Endothelial cell of umbilical vein (primary cell): ENCODE measurements at regions of chr2 and their contacts with region 1.

Region 1: GRCh38 chr2:215711471-215712034 is 275.7 kb upstream of the FN1 start:
- DNase-seq: peak; percentile 92
- H3K4me3 ChIP-seq: no peak overlapping the region
- H3K27ac ChIP-seq: peak overlapping the region; percentile 98
- H3K4me1 ChIP-seq: peaks cover 51% of the 10 kb centered on the region
- H3K27me3 ChIP-seq: no peaks in the 10 kb centered on the region
- CTCF ChIP-seq: no peak
- POLR2A ChIP-seq: peak; percentile 82

Region 2: GRCh38 chr2:215454519-215455246 is 256.9 kb before region 1 on chr2:
- CTCF ChIA-PET with region 1: interaction called, 4 read pairs
- POLR2A ChIA-PET with region 1: no interaction called
- dilution Hi-C with region 1: no loop called
- intact Hi-C with region 1: loop called (anchors 2 kb)
- DNase-seq: peak; percentile 73
- H3K4me3 ChIP-seq: no peak overlapping the region
- H3K27ac ChIP-seq: no peak overlapping the region
- H3K4me1 ChIP-seq: peaks cover 2% of the 10 kb centered on the region
- H3K27me3 ChIP-seq: no peaks in the 10 kb centered on the region
- CTCF ChIP-seq: peak; percentile 69
- POLR2A ChIP-seq: no peak

Region 3: DNA sequence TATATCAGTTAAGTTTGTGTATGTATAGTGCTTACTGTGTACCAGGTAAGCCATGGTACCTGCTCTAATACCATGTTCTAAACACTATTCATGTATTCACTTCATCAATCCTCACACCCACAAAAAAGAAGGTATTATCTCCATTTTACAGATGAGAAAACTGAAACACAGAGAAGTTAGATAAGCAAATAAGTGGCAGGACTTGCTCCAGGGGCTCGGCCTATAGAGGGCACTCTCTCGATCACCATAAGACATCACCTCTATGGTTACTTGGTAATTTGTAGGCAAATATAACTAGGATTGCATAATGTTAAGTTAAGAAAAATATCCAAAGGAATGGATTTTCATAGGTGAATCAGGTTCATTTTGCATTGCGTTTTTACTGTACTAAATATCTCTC is 157.6 kb before region 1 on chr2:
- CTCF ChIA-PET with region 1: no interaction called
- POLR2A ChIA-PET with region 1: no interaction called
- dilution Hi-C with region 1: no loop called
- intact Hi-C with region 1: no loop called
- DNase-seq: no peak
- H3K4me3 ChIP-seq: no peak overlapping the region
- H3K27ac ChIP-seq: no peak overlapping the region
- H3K4me1 ChIP-seq: peaks cover 12% of the 10 kb centered on the region
- H3K27me3 ChIP-seq: no peaks in the 10 kb centered on the region
- CTCF ChIP-seq: no peak
- POLR2A ChIP-seq: no peak

Region 4: GRCh38 chr2:215601990-215602721 is 109.4 kb before region 1 on chr2:
- CTCF ChIA-PET with region 1: interaction called, 3 read pairs
- POLR2A ChIA-PET with region 1: no interaction called
- dilution Hi-C with region 1: no loop called
- intact Hi-C with region 1: loop called (anchors 2 kb)
- DNase-seq: peak; percentile 97
- H3K4me3 ChIP-seq: peak overlapping the region in 1 of 3 experiments; percentile 19
- H3K27ac ChIP-seq: peak overlapping the region; percentile 85
- H3K4me1 ChIP-seq: peaks cover 24% of the 10 kb centered on the region
- H3K27me3 ChIP-seq: no peaks in the 10 kb centered on the region
- CTCF ChIP-seq: no peak
- POLR2A ChIP-seq: peak; percentile 62

Region 5: DNA sequence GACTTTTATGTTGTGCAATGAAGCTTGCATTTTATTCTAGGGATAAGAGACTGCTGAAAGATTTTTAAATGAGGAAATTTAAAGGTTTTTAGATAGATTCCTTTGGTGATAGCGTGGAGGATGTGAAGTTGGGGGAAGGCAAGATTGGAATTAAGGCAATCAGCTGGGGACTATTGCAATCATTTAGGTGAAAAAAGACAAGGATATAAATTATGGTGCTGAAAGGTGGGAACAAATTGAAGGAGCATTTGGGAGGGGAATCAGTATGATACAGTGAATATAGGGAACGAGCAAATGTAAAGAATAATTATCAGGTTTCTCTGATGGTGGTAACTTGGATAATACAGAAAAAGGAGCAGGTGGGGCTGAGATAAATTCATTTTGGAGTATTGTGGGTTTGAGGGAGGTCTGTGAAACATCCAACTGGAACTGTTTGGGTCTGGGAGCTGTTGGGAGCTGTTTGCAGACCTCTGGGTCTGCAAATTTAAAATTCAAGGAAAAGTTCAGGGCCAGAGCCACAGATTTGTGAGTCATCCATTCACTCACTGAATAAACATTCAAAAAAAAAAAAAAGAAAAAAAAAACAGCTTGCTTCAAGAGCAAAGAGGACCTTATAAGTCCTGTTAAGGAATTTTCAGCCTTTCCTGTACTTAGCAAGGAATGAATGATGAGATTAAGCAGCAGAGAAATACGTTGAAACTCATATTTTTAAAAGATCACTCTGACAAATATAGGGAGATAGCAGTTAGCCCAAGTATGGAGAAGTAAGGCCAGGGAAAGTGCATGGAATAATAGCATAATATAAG is 18.2 kb before region 1 on chr2:
- CTCF ChIA-PET with region 1: interaction called, 11 read pairs
- POLR2A ChIA-PET with region 1: interaction called, 4 read pairs
- dilution Hi-C with region 1: no loop called
- intact Hi-C with region 1: loop called (anchors 1 kb)
- DNase-seq: peak; percentile 85
- H3K4me3 ChIP-seq: no peak overlapping the region
- H3K27ac ChIP-seq: peak overlapping the region; percentile 83
- H3K4me1 ChIP-seq: peaks cover 33% of the 10 kb centered on the region
- H3K27me3 ChIP-seq: no peaks in the 10 kb centered on the region
- CTCF ChIP-seq: no peak
- POLR2A ChIP-seq: no peak

Region 6: GRCh38 chr2:215728504-215729087 is 17.0 kb after region 1 on chr2:
- CTCF ChIA-PET with region 1: interaction called, 3 read pairs
- POLR2A ChIA-PET with region 1: no interaction called
- dilution Hi-C with region 1: no loop called
- intact Hi-C with region 1: loop called (anchors 1 kb)
- DNase-seq: peak; percentile 61
- H3K4me3 ChIP-seq: no peak overlapping the region
- H3K27ac ChIP-seq: peak overlapping the region; percentile 26
- H3K4me1 ChIP-seq: peaks cover 21% of the 10 kb centered on the region
- H3K27me3 ChIP-seq: no peaks in the 10 kb centered on the region
- CTCF ChIP-seq: no peak
- POLR2A ChIP-seq: no peak

Region 7: DNA sequence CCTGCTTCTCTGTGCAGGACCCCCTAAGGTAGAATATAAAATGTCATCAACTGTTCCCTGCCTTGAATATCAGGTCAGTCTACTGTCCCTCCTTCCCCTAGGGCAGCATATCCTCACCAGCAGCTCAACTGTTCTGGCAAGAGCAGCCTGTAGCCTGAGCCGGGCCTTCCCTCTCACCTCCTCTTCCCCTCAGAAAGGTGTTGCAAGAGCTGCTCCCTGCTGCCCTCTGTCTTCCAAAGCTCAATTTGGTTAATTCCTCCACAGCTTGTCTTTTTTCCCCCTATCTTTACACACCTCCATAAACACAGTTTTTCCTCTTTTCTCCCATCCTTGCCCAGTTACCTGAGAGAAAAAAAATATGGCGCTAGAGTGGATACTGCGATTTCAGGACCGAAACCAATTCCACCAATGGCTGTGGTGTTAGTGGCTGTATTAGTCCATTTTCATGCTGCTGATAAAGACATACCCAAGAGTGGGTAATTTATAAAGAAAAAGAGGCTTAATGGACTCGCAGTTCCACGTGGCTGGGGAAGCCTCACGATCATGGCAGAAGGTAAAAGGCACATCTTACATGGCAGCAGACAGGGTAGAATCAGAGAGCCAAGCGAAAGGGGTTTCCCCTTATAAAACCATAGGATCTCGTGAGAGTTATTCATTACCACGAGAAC is 117.1 kb after region 1 on chr2:
- CTCF ChIA-PET with region 1: interaction called, 3 read pairs
- POLR2A ChIA-PET with region 1: interaction called, 3 read pairs
- dilution Hi-C with region 1: no loop called
- intact Hi-C with region 1: loop called (anchors 1 kb)
- DNase-seq: peak; percentile 52
- H3K4me3 ChIP-seq: no peak overlapping the region
- H3K27ac ChIP-seq: no peak overlapping the region
- H3K4me1 ChIP-seq: peaks cover 47% of the 10 kb centered on the region
- H3K27me3 ChIP-seq: no peaks in the 10 kb centered on the region
- CTCF ChIP-seq: peak; percentile 49 to 62
- POLR2A ChIP-seq: no peak